ENCODE measurements at regions of chr16 and their contacts with region 1.

Region 1: GRCh38 chr16:21713549-21714368 is 50.0 kb downstream of the OTOA start:
- DNase-seq: no peak
- H3K4me3 ChIP-seq: no peak overlapping the region
- H3K27ac ChIP-seq: no peak overlapping the region
- H3K4me1 ChIP-seq: peaks cover 0 to 1% (median 0%) of the 10 kb centered on the region in 4 donors
- H3K27me3 ChIP-seq: no peaks in the 10 kb centered on the region
- CTCF ChIP-seq: no peak
- EP300 ChIP-seq: no peak
- POLR2A ChIP-seq: no peak

Region 2: DNA sequence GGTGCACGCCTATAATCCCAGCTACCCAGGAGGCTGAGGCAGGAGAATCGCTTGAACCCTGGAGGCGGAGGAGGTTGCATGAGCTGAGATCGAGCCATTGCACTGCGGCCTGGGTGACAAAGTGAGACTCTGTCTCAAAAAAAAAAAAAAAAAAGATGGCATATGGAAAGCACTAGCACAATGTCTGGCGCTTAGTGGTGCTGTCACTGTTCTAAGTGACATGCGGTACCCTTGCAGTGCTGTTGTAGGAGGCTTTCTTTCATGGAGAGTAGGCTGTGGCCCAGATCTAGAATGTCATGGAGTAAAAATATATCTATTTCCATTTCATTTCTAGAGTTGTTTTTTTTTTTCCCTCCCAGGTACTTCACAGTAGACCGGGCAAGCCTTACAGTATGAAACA is 128.9 kb before region 1 on chr16:
- intact Hi-C with region 1: loop called (anchors 10 kb)
- DNase-seq: no peak
- H3K4me3 ChIP-seq: no peak overlapping the region
- H3K27ac ChIP-seq: no peak overlapping the region
- H3K4me1 ChIP-seq: peaks cover 0 to 14% (median 5%) of the 10 kb centered on the region in 4 donors
- H3K27me3 ChIP-seq: peaks cover 0 to 5% (median 0%) of the 10 kb centered on the region in 3 donors
- CTCF ChIP-seq: no peak
- EP300 ChIP-seq: no peak
- POLR2A ChIP-seq: no peak